Gastrocnemius medialis (tissue), 4 donors: ENCODE measurements at regions of chr6 and their contacts with region 1.

Region 1: GRCh38 chr6:77457720-77458349 is 5.5 kb downstream of the HTR1B start:
- DNase-seq: peak; percentile 10 to 19
- ATAC-seq: peak; percentile 54 to 62
- H3K4me3 ChIP-seq: no peak overlapping the region
- H3K27ac ChIP-seq: peak overlapping the region in 1 of 4 donors; percentile 29
- H3K4me1 ChIP-seq: no peaks in the 10 kb centered on the region
- H3K27me3 ChIP-seq: peaks cover 12 to 21% (median 13%) of the 10 kb centered on the region in 3 donors
- CTCF ChIP-seq: peak in 4 of 5 experiments; percentile 35 to 67 (median 55)
- POLR2A ChIP-seq: no peak

Region 2: GRCh38 chr6:75934643-75935472 is 1523.0 kb before region 1 on chr6:
- in situ Hi-C with region 1: loop called (anchors 10 to 25 kb)
- intact Hi-C with region 1: no loop called
- DNase-seq: peak; percentile 9 to 13
- ATAC-seq: peak; percentile 77 to 78
- H3K4me3 ChIP-seq: peak overlapping the region; percentile 41 to 62 (median 46)
- H3K27ac ChIP-seq: no peak overlapping the region
- H3K4me1 ChIP-seq: peaks cover 0 to 5% of the 10 kb centered on the region in 2 donors
- H3K27me3 ChIP-seq: no peaks in the 10 kb centered on the region
- CTCF ChIP-seq: peak in 4 of 5 experiments; percentile 40 to 63 (median 52)
- POLR2A ChIP-seq: no peak

Region 3: GRCh38 chr6:77217896-77218295 is 239.9 kb before region 1 on chr6:
- in situ Hi-C with region 1: no loop called
- intact Hi-C with region 1: no loop called
- DNase-seq: no peak
- ATAC-seq: no peak
- H3K4me3 ChIP-seq: no peak overlapping the region
- H3K27ac ChIP-seq: no peak overlapping the region
- H3K4me1 ChIP-seq: no peaks in the 10 kb centered on the region
- H3K27me3 ChIP-seq: no peaks in the 10 kb centered on the region
- CTCF ChIP-seq: no peak
- POLR2A ChIP-seq: no peak

Region 4: GRCh38 chr6:77609106-77609505 is 151.3 kb after region 1 on chr6:
- in situ Hi-C with region 1: no loop called
- intact Hi-C with region 1: no loop called
- DNase-seq: no peak
- ATAC-seq: no peak
- H3K4me3 ChIP-seq: no peak overlapping the region
- H3K27ac ChIP-seq: no peak overlapping the region
- H3K4me1 ChIP-seq: no peaks in the 10 kb centered on the region
- H3K27me3 ChIP-seq: no peaks in the 10 kb centered on the region
- CTCF ChIP-seq: no peak
- POLR2A ChIP-seq: no peak